Activated CD4-positive, alpha-beta T cell treated with anti-CD3 and anti-CD28 coated beads for 36 hours (primary cell): ENCODE measurements at regions of chr17 and their contacts with region 1.

Region 1: GRCh38 chr17:10072561-10073385 is 125.6 kb downstream of the GAS7 start:
- DNase-seq: no peak
- ATAC-seq: no peak
- H3K4me3 Mint-ChIP-seq: no peak overlapping the region
- H3K27ac Mint-ChIP-seq: no peak overlapping the region
- H3K4me1 Mint-ChIP-seq: no peaks in the 10 kb centered on the region
- H3K27me3 Mint-ChIP-seq: no peaks in the 10 kb centered on the region

Region 2: DNA sequence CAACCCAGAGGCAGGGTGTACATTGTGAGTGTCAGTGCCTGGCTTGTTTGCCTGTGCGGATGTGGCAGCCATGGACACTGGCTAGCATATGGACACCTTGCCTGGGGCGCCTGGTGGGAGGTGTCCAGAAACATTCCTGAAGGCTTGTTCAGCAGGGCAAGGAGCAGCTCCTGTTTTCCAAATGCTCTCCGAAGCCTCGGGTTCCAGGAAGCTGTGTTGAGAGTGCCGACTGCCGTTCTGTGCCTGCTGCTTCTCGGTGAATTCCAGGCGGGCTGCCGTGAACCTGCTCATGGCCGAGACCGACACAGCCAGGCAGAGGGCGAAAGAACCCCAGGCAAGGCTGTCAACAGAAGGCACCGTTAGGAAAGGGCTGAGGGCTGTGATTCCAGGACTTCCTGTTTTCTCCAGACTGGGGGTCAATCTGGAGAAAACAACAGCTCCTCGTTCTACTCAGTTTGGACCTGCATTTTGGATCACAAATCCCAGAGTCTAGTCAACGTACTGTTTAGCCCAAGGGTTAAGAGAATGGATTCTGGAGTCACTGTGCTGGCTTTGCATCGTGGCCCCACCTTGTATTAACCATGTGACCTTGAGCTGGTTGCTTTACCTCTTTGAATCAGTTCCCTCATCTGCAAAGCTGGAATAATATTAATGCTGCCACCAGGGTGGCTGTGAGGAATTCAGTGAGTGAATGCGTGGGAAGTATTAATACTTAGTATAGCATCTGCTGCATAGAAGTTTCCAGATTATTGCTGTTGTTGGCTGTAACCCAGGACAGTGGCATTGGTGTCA is 270.3 kb before region 1 on chr17:
- CTCF ChIA-PET with region 1: no interaction called
- POLR2A ChIA-PET with region 1: no interaction called
- intact Hi-C with region 1: no loop called
- DNase-seq: no peak
- ATAC-seq: no peak
- H3K4me3 Mint-ChIP-seq: no peak overlapping the region
- H3K27ac Mint-ChIP-seq: no peak overlapping the region
- H3K4me1 Mint-ChIP-seq: no peaks in the 10 kb centered on the region
- H3K27me3 Mint-ChIP-seq: peaks cover 9% of the 10 kb centered on the region

Region 3: GRCh38 chr17:10135539-10136257 is 62.9 kb after region 1 on chr17:
- CTCF ChIA-PET with region 1: interaction called, 3 read pairs
- POLR2A ChIA-PET with region 1: no interaction called
- intact Hi-C with region 1: loop called in 1 of 2 experiments (anchors 10 kb)
- DNase-seq: peak; percentile 29
- ATAC-seq: peak; percentile 33
- H3K4me3 Mint-ChIP-seq: no peak overlapping the region
- H3K27ac Mint-ChIP-seq: no peak overlapping the region
- H3K4me1 Mint-ChIP-seq: peaks cover 14% of the 10 kb centered on the region
- H3K27me3 Mint-ChIP-seq: no peaks in the 10 kb centered on the region

Region 4: GRCh38 chr17:10471853-10472252 is 399.1 kb after region 1 on chr17:
- CTCF ChIA-PET with region 1: no interaction called
- POLR2A ChIA-PET with region 1: no interaction called
- intact Hi-C with region 1: no loop called
- DNase-seq: no peak
- ATAC-seq: no peak
- H3K4me3 Mint-ChIP-seq: no peak overlapping the region
- H3K27ac Mint-ChIP-seq: no peak overlapping the region
- H3K4me1 Mint-ChIP-seq: no peaks in the 10 kb centered on the region
- H3K27me3 Mint-ChIP-seq: no peaks in the 10 kb centered on the region

Region 5: GRCh38 chr17:10482252-10482651 is 409.5 kb after region 1 on chr17:
- CTCF ChIA-PET with region 1: no interaction called
- POLR2A ChIA-PET with region 1: no interaction called
- intact Hi-C with region 1: no loop called
- DNase-seq: no peak
- ATAC-seq: no peak
- H3K4me3 Mint-ChIP-seq: no peak overlapping the region
- H3K27ac Mint-ChIP-seq: no peak overlapping the region
- H3K4me1 Mint-ChIP-seq: no peaks in the 10 kb centered on the region
- H3K27me3 Mint-ChIP-seq: no peaks in the 10 kb centered on the region